CD8-positive, alpha-beta T cell (primary cell): ENCODE measurements at regions of chr17 and their contacts with region 1.

Region 1: DNA sequence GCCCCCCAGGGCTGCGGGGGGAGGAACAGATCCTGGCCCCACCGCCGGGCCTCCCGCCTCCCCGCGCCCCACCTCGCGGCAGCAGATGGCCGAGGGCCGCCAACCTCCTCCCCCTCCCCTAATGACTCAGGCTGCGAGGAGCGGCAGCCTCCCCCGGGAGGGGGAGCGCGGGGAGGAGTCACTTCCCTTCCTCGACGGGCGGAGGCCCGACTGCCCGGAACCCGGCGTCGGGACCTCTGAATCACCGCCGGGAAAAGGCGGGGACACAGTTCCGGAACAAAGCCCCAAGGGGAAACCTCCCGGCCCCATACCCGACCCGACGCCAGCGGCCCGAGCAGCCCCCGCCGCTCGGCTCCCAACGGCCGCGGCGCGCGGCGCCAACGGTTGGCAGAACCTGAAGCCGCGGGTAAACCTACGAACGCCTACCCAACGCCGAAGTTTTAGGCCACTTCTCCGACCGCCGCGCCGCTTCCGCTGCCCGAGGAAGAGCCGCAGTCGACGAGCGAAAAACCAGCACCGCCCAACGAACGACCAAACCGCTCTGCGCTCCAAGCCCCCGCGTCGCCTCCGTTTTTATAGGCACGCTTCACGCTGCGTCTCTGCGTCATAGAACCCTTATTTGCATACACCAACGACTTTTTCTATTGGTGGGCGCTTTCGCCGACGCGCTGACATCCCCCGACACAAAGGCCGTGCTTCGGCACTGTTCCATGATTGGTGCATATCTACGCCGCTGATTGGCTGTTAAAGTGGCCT is 5.2 kb upstream of the UNK start:
- DNase-seq: peak; percentile 87 to 99 (median 93)
- ATAC-seq: peak; percentile 66
- H3K4me3 ChIP-seq: peak overlapping the region; percentile 87
- H3K4me3 Mint-ChIP-seq: peak overlapping the region; percentile 93
- H3K27ac ChIP-seq: peak overlapping the region; percentile 97
- H3K27ac Mint-ChIP-seq: peak overlapping the region; percentile 98
- H3K4me1 ChIP-seq: peaks cover 44% of the 10 kb centered on the region
- H3K4me1 Mint-ChIP-seq: peaks cover 46% of the 10 kb centered on the region
- H3K27me3 ChIP-seq: no peaks in the 10 kb centered on the region
- H3K27me3 Mint-ChIP-seq: no peaks in the 10 kb centered on the region
- CTCF ChIP-seq: no peak

Region 2: GRCh38 chr17:75764711-75765421 is 14.5 kb before region 1 on chr17 and contains the start of gene GALK1:
- CTCF ChIA-PET with region 1: interaction called, 24 read pairs
- POLR2A ChIA-PET with region 1: interaction called, 180 read pairs
- intact Hi-C with region 1: loop called in 1 of 2 experiments (anchors 1 kb)
- DNase-seq: peak; percentile 46 to 89 (median 70)
- ATAC-seq: peak; percentile 94
- H3K4me3 ChIP-seq: peak within 1 kb of the TSS; percentile 62 to 86
- H3K4me3 Mint-ChIP-seq: peak within 1 kb of the TSS; percentile 74
- H3K27ac ChIP-seq: peak within 1 kb of the TSS; percentile 51 to 63
- H3K27ac Mint-ChIP-seq: peak within 1 kb of the TSS; percentile 55
- H3K4me1 ChIP-seq: peaks cover 16% of the 10 kb centered on the region
- H3K4me1 Mint-ChIP-seq: peaks cover 8% of the 10 kb centered on the region
- H3K27me3 ChIP-seq: no peaks in the 10 kb centered on the region
- H3K27me3 Mint-ChIP-seq: no peaks in the 10 kb centered on the region
- CTCF ChIP-seq: peak; percentile 40
- total RNA-seq, gene GALK1: 3.4 to 3.7 TPM

Region 3: GRCh38 chr17:75827252-75828115 is 48.1 kb after region 1 on chr17:
- CTCF ChIA-PET with region 1: interaction called, 24 read pairs
- POLR2A ChIA-PET with region 1: interaction called, 36 read pairs
- intact Hi-C with region 1: loop called (anchors 2 kb)
- DNase-seq: peak in 8 of 9 experiments; percentile 46 to 85 (median 72)
- ATAC-seq: peak; percentile 66
- H3K4me3 ChIP-seq: peak overlapping the region; percentile 33 to 39
- H3K4me3 Mint-ChIP-seq: peak overlapping the region; percentile 55
- H3K27ac ChIP-seq: peak overlapping the region; percentile 50 to 78
- H3K27ac Mint-ChIP-seq: peak overlapping the region; percentile 88
- H3K4me1 ChIP-seq: peaks cover 31% of the 10 kb centered on the region
- H3K4me1 Mint-ChIP-seq: peaks cover 21% of the 10 kb centered on the region
- H3K27me3 ChIP-seq: no peaks in the 10 kb centered on the region
- H3K27me3 Mint-ChIP-seq: no peaks in the 10 kb centered on the region
- CTCF ChIP-seq: peak; percentile 65

Region 4: DNA sequence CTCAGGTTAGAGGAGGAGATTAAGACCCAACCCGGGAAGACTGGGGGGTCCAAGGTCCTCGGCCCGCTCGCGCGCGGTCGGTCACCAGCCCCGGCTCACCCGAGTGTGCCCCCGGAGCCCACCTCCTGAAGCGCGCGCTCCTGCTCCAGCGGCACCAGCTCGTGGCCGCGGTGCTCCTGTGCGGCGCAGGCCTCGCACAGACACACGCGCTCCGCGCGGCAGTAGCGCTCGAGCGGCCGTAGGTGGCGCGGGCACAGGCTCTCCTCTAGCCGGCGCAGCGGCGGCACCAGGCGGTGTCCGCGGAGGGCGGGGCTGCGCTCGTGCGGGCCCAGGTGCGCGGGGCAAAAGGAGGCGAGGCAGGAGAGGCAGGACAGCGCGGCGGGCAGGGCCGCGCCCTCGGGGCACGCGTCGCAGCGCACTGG is 98.4 kb after region 1 on chr17:
- CTCF ChIA-PET with region 1: interaction called, 3 read pairs
- POLR2A ChIA-PET with region 1: interaction called, 11 read pairs
- intact Hi-C with region 1: no loop called
- DNase-seq: peak; percentile 44 to 85 (median 72)
- ATAC-seq: peak; percentile 67
- H3K4me3 ChIP-seq: peak overlapping the region; percentile 41 to 60
- H3K4me3 Mint-ChIP-seq: peak overlapping the region; percentile 88
- H3K27ac ChIP-seq: peak overlapping the region in 1 of 2 experiments; percentile 0
- H3K27ac Mint-ChIP-seq: peak overlapping the region; percentile 80
- H3K4me1 ChIP-seq: peaks cover 42% of the 10 kb centered on the region
- H3K4me1 Mint-ChIP-seq: peaks cover 46% of the 10 kb centered on the region
- H3K27me3 ChIP-seq: peaks cover 0 to 8% of the 10 kb centered on the region in 2 experiments
- H3K27me3 Mint-ChIP-seq: no peaks in the 10 kb centered on the region
- CTCF ChIP-seq: peak; percentile 69

Region 5: GRCh38 chr17:75896415-75897159 is 117.2 kb after region 1 on chr17 and contains the start of gene TRIM65:
- CTCF ChIA-PET with region 1: interaction called, 3 read pairs
- POLR2A ChIA-PET with region 1: interaction called, 9 read pairs
- intact Hi-C with region 1: loop called (anchors 1 to 5 kb)
- DNase-seq: peak; percentile 51 to 88 (median 78)
- ATAC-seq: peak; percentile 86
- H3K4me3 ChIP-seq: peak within 1 kb of the TSS; percentile 61 to 73
- H3K4me3 Mint-ChIP-seq: peak within 1 kb of the TSS; percentile 79
- H3K27ac ChIP-seq: peak within 1 kb of the TSS; percentile 47 to 66
- H3K27ac Mint-ChIP-seq: peak within 1 kb of the TSS; percentile 80
- H3K4me1 ChIP-seq: peaks cover 20% of the 10 kb centered on the region
- H3K4me1 Mint-ChIP-seq: peaks cover 27% of the 10 kb centered on the region
- H3K27me3 ChIP-seq: no peaks in the 10 kb centered on the region
- H3K27me3 Mint-ChIP-seq: no peaks in the 10 kb centered on the region
- CTCF ChIP-seq: peak; percentile 39
- total RNA-seq, gene TRIM65: 13.6 to 15.1 TPM

Region 6: DNA sequence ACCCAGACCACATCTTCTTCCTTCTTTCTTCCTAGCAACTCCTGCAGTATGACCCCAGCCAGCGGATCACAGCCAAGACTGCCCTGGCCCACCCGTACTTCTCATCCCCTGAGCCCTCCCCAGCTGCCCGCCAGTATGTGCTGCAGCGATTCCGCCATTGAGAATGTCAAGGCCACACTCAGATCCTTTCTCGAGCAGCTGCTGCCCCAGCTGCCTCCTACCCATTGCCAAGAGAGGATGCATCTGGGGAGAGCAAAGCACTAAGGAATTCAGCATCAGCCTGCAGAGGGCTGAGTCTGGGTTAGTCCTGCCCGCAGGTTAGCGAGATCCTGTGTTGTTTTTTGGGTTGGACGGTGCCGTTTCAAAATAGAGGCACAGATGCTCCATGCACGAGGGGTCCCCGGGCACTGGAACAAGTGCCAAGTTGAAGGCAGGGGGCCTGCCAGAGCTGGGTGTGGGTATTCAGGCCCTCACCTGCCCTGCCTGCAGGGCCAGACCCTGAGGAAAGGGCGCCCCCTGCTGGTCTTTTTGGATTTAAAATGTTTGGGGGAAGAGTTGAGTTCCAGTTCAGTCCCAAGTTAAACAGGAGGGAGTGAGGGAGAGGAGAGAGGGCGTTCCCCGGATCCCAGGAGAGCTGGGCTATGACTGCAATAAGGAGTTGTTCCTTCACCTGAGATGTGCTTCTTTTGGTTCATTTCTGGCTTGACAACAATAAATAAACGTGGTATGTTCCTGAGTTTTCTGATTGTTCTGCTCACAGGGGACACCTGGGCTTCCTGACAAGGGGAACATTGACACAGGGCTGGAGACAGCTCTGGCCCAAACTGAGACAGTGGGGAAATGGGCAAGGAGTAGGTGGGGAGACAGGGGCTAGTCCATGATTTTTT is 226.1 kb after region 1 on chr17:
- CTCF ChIA-PET with region 1: no interaction called
- POLR2A ChIA-PET with region 1: no interaction called
- intact Hi-C with region 1: loop called in 1 of 2 experiments (anchors 5 kb)
- DNase-seq: peak; percentile 53 to 90 (median 76)
- ATAC-seq: peak; percentile 63
- H3K4me3 ChIP-seq: no peak overlapping the region
- H3K4me3 Mint-ChIP-seq: no peak overlapping the region
- H3K27ac ChIP-seq: no peak overlapping the region
- H3K27ac Mint-ChIP-seq: no peak overlapping the region
- H3K4me1 ChIP-seq: no peaks in the 10 kb centered on the region
- H3K4me1 Mint-ChIP-seq: no peaks in the 10 kb centered on the region
- H3K27me3 ChIP-seq: no peaks in the 10 kb centered on the region
- H3K27me3 Mint-ChIP-seq: no peaks in the 10 kb centered on the region
- CTCF ChIP-seq: no peak